ENCODE measurements at regions of chr7 and their contacts with region 1.

Region 1: GRCh38 chr7:131040467-131040932 is 287.2 kb upstream of the MKLN1 start:
- DNase-seq: peak; percentile 79
- ATAC-seq: peak; percentile 77
- H3K4me3 ChIP-seq: no peak overlapping the region
- H3K4me3 Mint-ChIP-seq: peak overlapping the region; percentile 44
- H3K27ac ChIP-seq: peak overlapping the region in 1 of 2 donors; percentile 6
- H3K27ac Mint-ChIP-seq: peak overlapping the region; percentile 55
- H3K4me1 ChIP-seq: peaks cover 5 to 23% of the 10 kb centered on the region in 2 donors
- H3K4me1 Mint-ChIP-seq: peaks cover 54% of the 10 kb centered on the region
- H3K27me3 ChIP-seq: no peaks in the 10 kb centered on the region
- H3K27me3 Mint-ChIP-seq: no peaks in the 10 kb centered on the region
- CTCF ChIP-seq: peak; percentile 98

Region 2: GRCh38 chr7:130875265-130875741 is 165.2 kb before region 1 on chr7:
- CTCF ChIA-PET with region 1: interaction called, 14 read pairs
- POLR2A ChIA-PET with region 1: no interaction called
- intact Hi-C with region 1: no loop called
- DNase-seq: peak; percentile 53
- ATAC-seq: peak; percentile 82
- H3K4me3 ChIP-seq: no peak overlapping the region
- H3K4me3 Mint-ChIP-seq: no peak overlapping the region
- H3K27ac ChIP-seq: no peak overlapping the region
- H3K27ac Mint-ChIP-seq: no peak overlapping the region
- H3K4me1 ChIP-seq: no peaks in the 10 kb centered on the region
- H3K4me1 Mint-ChIP-seq: peaks cover 9% of the 10 kb centered on the region
- H3K27me3 ChIP-seq: no peaks in the 10 kb centered on the region
- H3K27me3 Mint-ChIP-seq: no peaks in the 10 kb centered on the region
- CTCF ChIP-seq: peak; percentile 89

Region 3: GRCh38 chr7:130982160-130982638 is 58.3 kb before region 1 on chr7:
- CTCF ChIA-PET with region 1: interaction called, 93 read pairs
- POLR2A ChIA-PET with region 1: no interaction called
- intact Hi-C with region 1: loop called (anchors 1 kb)
- DNase-seq: peak; percentile 70
- ATAC-seq: peak; percentile 73
- H3K4me3 ChIP-seq: no peak overlapping the region
- H3K4me3 Mint-ChIP-seq: no peak overlapping the region
- H3K27ac ChIP-seq: peak overlapping the region; percentile 9 to 61
- H3K27ac Mint-ChIP-seq: no peak overlapping the region
- H3K4me1 ChIP-seq: peaks cover 13 to 16% of the 10 kb centered on the region in 2 donors
- H3K4me1 Mint-ChIP-seq: peaks cover 25% of the 10 kb centered on the region
- H3K27me3 ChIP-seq: no peaks in the 10 kb centered on the region
- H3K27me3 Mint-ChIP-seq: no peaks in the 10 kb centered on the region
- CTCF ChIP-seq: peak; percentile 87

Region 4: GRCh38 chr7:131016230-131016629 is 24.3 kb before region 1 on chr7:
- CTCF ChIA-PET with region 1: interaction called, 11 read pairs
- POLR2A ChIA-PET with region 1: no interaction called
- intact Hi-C with region 1: no loop called
- DNase-seq: no peak
- ATAC-seq: no peak
- H3K4me3 ChIP-seq: no peak overlapping the region
- H3K4me3 Mint-ChIP-seq: no peak overlapping the region
- H3K27ac ChIP-seq: peak overlapping the region in 1 of 2 donors; percentile 1
- H3K27ac Mint-ChIP-seq: no peak overlapping the region
- H3K4me1 ChIP-seq: peaks cover 37 to 40% of the 10 kb centered on the region in 2 donors
- H3K4me1 Mint-ChIP-seq: peaks cover 80% of the 10 kb centered on the region
- H3K27me3 ChIP-seq: no peaks in the 10 kb centered on the region
- H3K27me3 Mint-ChIP-seq: no peaks in the 10 kb centered on the region
- CTCF ChIP-seq: no peak

Region 5: GRCh38 chr7:131057015-131057793 is 16.7 kb after region 1 on chr7:
- CTCF ChIA-PET with region 1: interaction called, 25 read pairs
- POLR2A ChIA-PET with region 1: interaction called, 7 read pairs
- intact Hi-C with region 1: no loop called
- DNase-seq: peak; percentile 79
- ATAC-seq: peak; percentile 61
- H3K4me3 ChIP-seq: peak overlapping the region in 4 of 5 experiments; percentile 18 to 29 (median 25)
- H3K4me3 Mint-ChIP-seq: peak overlapping the region; percentile 80
- H3K27ac ChIP-seq: peak overlapping the region; percentile 96
- H3K27ac Mint-ChIP-seq: peak overlapping the region; percentile 87
- H3K4me1 ChIP-seq: peaks cover 72 to 80% of the 10 kb centered on the region in 2 donors
- H3K4me1 Mint-ChIP-seq: peaks cover 74% of the 10 kb centered on the region
- H3K27me3 ChIP-seq: no peaks in the 10 kb centered on the region
- H3K27me3 Mint-ChIP-seq: no peaks in the 10 kb centered on the region
- CTCF ChIP-seq: no peak